Dorsolateral prefrontal cortex (tissue), 120 donors: ENCODE measurements at regions of chr11 and their contacts with region 1.

Region 1: GRCh38 chr11:128552783-128553661 is 34.3 kb downstream of the ETS1 start:
- DNase-seq: peak in 8 of 10 donors; percentile 62 to 79 (median 73)
- H3K4me3 ChIP-seq: peak overlapping the region in 51 of 59 donors; percentile 1 to 58 (median 27)
- H3K27ac ChIP-seq: peak overlapping the region in 34 of 59 donors; percentile 4 to 75 (median 39)
- H3K27me3 ChIP-seq: peaks cover 0 to 5% (median 0%) of the 10 kb centered on the region in 45 donors
- CTCF ChIP-seq: peak in 27 of 56 donors; percentile 6 to 46 (median 22)

Region 2: GRCh38 chr11:128290106-128290840 is 262.7 kb before region 1 on chr11:
- intact Hi-C with region 1: loop called (anchors 2 to 5 kb)
- DNase-seq: peak in 3 of 10 donors; percentile 36 to 52 (median 45)
- H3K4me3 ChIP-seq: peak overlapping the region in 12 of 59 donors; percentile 5 to 37 (median 28)
- H3K27ac ChIP-seq: no peak overlapping the region
- H3K27me3 ChIP-seq: peaks cover 0 to 32% (median 0%) of the 10 kb centered on the region in 45 donors
- CTCF ChIP-seq: peak; percentile 71 to 95 (median 88)

Region 3: DNA sequence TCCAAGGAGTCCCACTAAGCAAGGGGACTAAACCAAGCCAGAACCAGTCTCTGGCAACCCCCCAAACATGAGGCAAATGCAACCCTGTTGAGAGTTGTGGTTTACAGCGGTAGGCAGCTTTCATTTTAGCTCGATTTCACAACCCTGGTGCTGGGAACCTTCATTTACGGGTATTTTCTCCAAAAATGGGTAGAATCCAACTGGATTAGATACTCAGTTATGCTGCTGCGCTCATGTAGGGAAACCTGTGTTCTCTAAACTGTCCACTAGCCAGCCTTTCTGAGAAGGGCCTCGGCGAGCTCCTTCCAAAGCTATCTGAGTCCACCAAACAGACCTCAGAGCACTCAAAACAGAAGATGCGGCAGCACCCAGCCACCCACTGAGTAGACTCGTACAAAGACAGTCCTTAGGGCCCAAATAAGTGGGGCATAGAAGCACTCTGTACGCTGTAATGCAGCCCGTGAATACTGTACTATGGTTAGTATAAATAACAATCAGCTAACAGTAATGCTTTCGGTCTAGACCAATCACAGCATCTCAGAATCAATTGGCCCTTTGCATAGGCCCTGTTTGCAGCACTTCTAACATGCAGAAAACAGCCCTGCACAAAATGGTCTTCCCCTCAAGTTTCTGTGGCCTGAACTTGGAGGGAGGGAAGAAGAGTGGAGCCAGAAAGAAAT is 70.4 kb before region 1 on chr11:
- intact Hi-C with region 1: loop called in 1 of 2 experiments (anchors 5 kb)
- DNase-seq: no peak
- H3K4me3 ChIP-seq: peak overlapping the region in 7 of 59 donors; percentile 1 to 15 (median 7)
- H3K27ac ChIP-seq: peak overlapping the region in 29 of 59 donors; percentile 1 to 72 (median 36)
- H3K27me3 ChIP-seq: no peaks in the 10 kb centered on the region
- CTCF ChIP-seq: no peak

Region 4: GRCh38 chr11:128532572-128533091 is 20.4 kb before region 1 on chr11:
- intact Hi-C with region 1: loop called in 1 of 2 experiments (anchors 2 kb)
- DNase-seq: peak in 1 of 10 donors; percentile 36
- H3K4me3 ChIP-seq: peak overlapping the region in 19 of 59 donors; percentile 1 to 36 (median 17)
- H3K27ac ChIP-seq: peak overlapping the region in 54 of 59 donors; percentile 0 to 88 (median 62)
- H3K27me3 ChIP-seq: peaks cover 0 to 7% (median 0%) of the 10 kb centered on the region in 45 donors
- CTCF ChIP-seq: peak in 2 of 56 donors; percentile 10 to 19

Region 5: GRCh38 chr11:128831174-128832120 is 278.4 kb after region 1 on chr11:
- intact Hi-C with region 1: loop called in 1 of 2 experiments (anchors 10 kb)
- DNase-seq: peak; percentile 66 to 88 (median 78)
- H3K4me3 ChIP-seq: peak overlapping the region in 12 of 59 donors; percentile 2 to 34 (median 26)
- H3K27ac ChIP-seq: no peak overlapping the region
- H3K27me3 ChIP-seq: peaks cover 0 to 28% (median 0%) of the 10 kb centered on the region in 45 donors
- CTCF ChIP-seq: peak; percentile 90 to 99 (median 96)